ENCODE measurements at regions of chr16 and their contacts with region 1.

Region 1: GRCh38 chr16:80231888-80232287 is 308.9 kb upstream of the DYNLRB2 start:
- DNase-seq: peak; percentile 63
- ATAC-seq: peak; percentile 98
- H3K4me3 Mint-ChIP-seq: no peak overlapping the region
- H3K27ac Mint-ChIP-seq: no peak overlapping the region
- H3K4me1 Mint-ChIP-seq: peaks cover 2% of the 10 kb centered on the region
- H3K27me3 Mint-ChIP-seq: peaks cover 10% of the 10 kb centered on the region

Region 2: GRCh38 chr16:79751471-79752184 is 480.3 kb before region 1 on chr16:
- CTCF ChIA-PET with region 1: no interaction called
- POLR2A ChIA-PET with region 1: no interaction called
- intact Hi-C with region 1: no loop called
- DNase-seq: no peak
- ATAC-seq: no peak
- H3K4me3 Mint-ChIP-seq: no peak overlapping the region
- H3K27ac Mint-ChIP-seq: no peak overlapping the region
- H3K4me1 Mint-ChIP-seq: peaks cover 24% of the 10 kb centered on the region
- H3K27me3 Mint-ChIP-seq: peaks cover 6% of the 10 kb centered on the region

Region 3: DNA sequence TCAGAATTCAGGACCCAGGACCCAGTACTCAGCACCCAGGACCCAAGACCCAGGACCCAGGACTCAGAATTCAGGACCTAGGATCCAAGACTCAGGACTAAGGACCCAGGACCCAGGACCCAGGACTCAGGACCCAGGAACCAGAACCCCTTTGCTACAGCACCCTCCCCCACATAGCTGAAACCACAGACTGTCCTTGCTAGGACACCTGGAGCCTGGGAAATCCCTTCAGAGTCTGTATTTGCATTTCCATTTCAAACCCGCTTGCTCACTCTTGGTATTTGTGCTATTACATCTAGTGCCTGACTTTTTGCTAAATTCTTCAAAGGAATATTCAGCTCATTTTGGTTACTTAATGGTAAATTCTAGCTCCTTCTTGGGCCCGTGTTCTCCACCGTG is 355.6 kb before region 1 on chr16:
- CTCF ChIA-PET with region 1: no interaction called
- POLR2A ChIA-PET with region 1: no interaction called
- intact Hi-C with region 1: no loop called
- DNase-seq: no peak
- ATAC-seq: no peak
- H3K4me3 Mint-ChIP-seq: no peak overlapping the region
- H3K27ac Mint-ChIP-seq: no peak overlapping the region
- H3K4me1 Mint-ChIP-seq: no peaks in the 10 kb centered on the region
- H3K27me3 Mint-ChIP-seq: peaks cover 5% of the 10 kb centered on the region

Region 4: GRCh38 chr16:79897453-79898146 is 334.3 kb before region 1 on chr16:
- CTCF ChIA-PET with region 1: no interaction called
- POLR2A ChIA-PET with region 1: no interaction called
- intact Hi-C with region 1: no loop called
- DNase-seq: no peak
- ATAC-seq: no peak
- H3K4me3 Mint-ChIP-seq: no peak overlapping the region
- H3K27ac Mint-ChIP-seq: no peak overlapping the region
- H3K4me1 Mint-ChIP-seq: no peaks in the 10 kb centered on the region
- H3K27me3 Mint-ChIP-seq: no peaks in the 10 kb centered on the region

Region 5: GRCh38 chr16:80197741-80198201 is 34.1 kb before region 1 on chr16:
- CTCF ChIA-PET with region 1: no interaction called
- POLR2A ChIA-PET with region 1: no interaction called
- intact Hi-C with region 1: loop called in 1 of 2 experiments (anchors 1 kb)
- DNase-seq: peak; percentile 10
- ATAC-seq: peak; percentile 94
- H3K4me3 Mint-ChIP-seq: no peak overlapping the region
- H3K27ac Mint-ChIP-seq: peak overlapping the region; percentile 34
- H3K4me1 Mint-ChIP-seq: peaks cover 14% of the 10 kb centered on the region
- H3K27me3 Mint-ChIP-seq: peaks cover 31% of the 10 kb centered on the region

Region 6: GRCh38 chr16:80208015-80208414 is 23.9 kb before region 1 on chr16:
- CTCF ChIA-PET with region 1: no interaction called
- POLR2A ChIA-PET with region 1: interaction called, 12 read pairs
- intact Hi-C with region 1: no loop called
- DNase-seq: no peak
- ATAC-seq: no peak
- H3K4me3 Mint-ChIP-seq: no peak overlapping the region
- H3K27ac Mint-ChIP-seq: no peak overlapping the region
- H3K4me1 Mint-ChIP-seq: no peaks in the 10 kb centered on the region
- H3K27me3 Mint-ChIP-seq: peaks cover 21% of the 10 kb centered on the region